A673 (cell line): ENCODE measurements at regions of chr12 and their contacts with region 1.

Region 1: DNA sequence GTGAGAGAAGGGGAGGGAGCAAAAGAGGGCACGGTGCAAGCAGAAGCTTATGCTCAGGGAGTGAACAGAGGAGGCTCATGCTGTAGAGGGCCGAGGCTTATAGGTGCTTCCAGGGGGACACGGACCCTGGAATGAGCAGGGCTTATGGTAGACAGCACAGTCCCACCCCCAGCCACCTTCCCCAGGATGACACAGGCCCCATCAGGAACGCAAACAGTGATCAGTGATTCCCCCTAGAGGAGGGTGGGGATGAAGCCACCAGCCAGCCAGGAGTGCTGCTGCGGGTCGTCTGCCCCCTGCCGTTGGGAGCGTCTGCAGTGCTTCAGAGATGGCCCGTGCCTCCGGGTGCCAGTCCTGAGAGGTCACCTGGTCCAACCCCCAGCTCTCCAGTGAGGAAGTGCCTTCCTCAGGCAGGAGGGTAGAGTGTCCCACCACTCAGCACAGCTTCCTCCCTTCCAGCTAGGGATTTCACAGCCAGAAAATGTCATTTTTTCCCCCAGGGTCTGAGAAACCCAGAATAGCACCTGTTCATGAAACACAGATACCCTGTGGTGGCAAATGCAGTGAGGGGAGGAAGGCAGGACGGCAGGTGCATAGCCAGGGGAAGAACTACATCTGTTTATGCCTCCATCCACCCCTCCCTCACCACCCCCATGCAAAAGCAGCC is 60.7 kb downstream of the SLC6A12 start:
- DNase-seq: peak; percentile 67
- H3K4me3 ChIP-seq: no peak overlapping the region
- H3K27ac ChIP-seq: no peak overlapping the region
- H3K4me1 ChIP-seq: no peaks in the 10 kb centered on the region
- H3K27me3 ChIP-seq: no peaks in the 10 kb centered on the region
- CTCF ChIP-seq: peak; percentile 81

Region 2: DNA sequence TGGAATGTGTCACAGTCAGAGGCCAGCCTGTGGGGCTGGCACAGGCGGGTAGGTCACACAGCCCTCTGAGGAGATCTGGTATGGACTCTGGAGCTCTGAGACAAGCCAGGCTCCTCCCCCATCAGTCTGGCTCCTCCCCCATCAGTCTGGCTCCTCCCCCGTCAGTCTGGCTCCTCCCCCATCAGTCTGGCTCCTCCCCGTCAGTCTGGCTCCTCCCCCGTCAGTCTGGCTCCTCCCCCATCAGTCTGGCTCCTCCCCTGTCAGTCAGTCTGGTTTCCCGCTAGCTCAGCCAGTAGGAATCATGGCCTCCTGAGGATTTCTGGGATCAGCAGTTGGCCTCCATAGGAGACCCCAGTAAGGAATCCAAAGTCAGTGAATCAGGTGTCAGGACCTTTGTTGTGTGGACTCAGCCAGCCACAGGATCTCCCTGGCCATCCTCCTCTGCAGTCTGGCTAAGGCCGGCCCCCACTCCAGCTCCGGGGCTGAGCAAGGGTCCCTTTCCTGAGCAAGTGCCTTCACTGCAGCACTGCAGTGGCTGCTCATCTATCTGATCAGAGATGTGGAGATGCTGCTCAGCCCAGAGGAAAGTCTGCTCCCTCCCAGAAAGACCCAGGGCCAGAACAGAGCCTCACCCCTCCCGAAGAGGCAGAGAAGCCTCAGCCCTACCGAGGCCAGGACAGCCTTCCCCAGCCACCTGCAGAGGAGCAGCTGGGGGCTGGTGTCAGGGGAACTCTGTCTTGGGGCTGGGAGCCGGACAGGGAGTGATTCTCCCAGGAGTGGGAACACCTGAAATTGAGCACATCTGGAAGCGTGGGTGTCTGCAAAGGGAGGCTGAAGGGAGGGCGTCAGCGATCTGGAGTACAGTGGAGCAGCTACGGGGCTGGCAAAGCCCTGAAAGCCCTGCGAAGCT is 51.0 kb before region 1 on chr12:
- CTCF ChIA-PET with region 1: interaction called, 23 read pairs
- POLR2A ChIA-PET with region 1: no interaction called
- intact Hi-C with region 1: no loop called
- DNase-seq: no peak
- H3K4me3 ChIP-seq: no peak overlapping the region
- H3K27ac ChIP-seq: no peak overlapping the region
- H3K4me1 ChIP-seq: no peaks in the 10 kb centered on the region
- H3K27me3 ChIP-seq: peaks cover 12% of the 10 kb centered on the region
- CTCF ChIP-seq: no peak

Region 3: DNA sequence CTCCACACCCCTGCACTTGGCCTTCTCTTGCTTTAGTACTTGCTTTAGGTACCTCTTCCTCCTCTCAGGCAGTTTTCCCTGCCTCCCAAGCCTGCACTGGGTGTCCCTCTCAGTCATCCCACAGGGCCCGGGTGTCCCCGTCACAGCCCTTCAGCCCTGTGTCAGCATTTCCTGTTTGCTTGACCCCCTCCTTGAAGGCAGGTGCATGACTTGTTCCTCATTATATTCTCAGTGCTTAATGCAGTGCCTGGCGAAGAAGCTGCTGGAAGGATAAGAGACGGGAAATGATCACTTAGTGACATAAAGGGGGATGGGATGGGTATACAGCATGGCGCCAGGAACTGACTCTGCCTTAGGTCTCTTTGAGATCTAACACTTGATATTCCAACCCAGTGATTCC is 25.1 kb before region 1 on chr12:
- CTCF ChIA-PET with region 1: no interaction called
- POLR2A ChIA-PET with region 1: no interaction called
- intact Hi-C with region 1: no loop called
- DNase-seq: no peak
- H3K4me3 ChIP-seq: no peak overlapping the region
- H3K27ac ChIP-seq: no peak overlapping the region
- H3K4me1 ChIP-seq: no peaks in the 10 kb centered on the region
- H3K27me3 ChIP-seq: no peaks in the 10 kb centered on the region
- CTCF ChIP-seq: no peak